ENCODE measurements at regions of chr5 and their contacts with region 1.

Region 1: GRCh38 chr5:145834917-145835847 is at the start of gene PRELID2:
- DNase-seq: peak; percentile 94 to 96
- ATAC-seq: peak; percentile 94
- H3K4me3 ChIP-seq: peak within 1 kb of the TSS; percentile 37 to 92
- H3K27ac ChIP-seq: peak within 1 kb of the TSS; percentile 67 to 69
- H3K4me1 ChIP-seq: peaks cover 0 to 7% of the 10 kb centered on the region in 2 donors
- H3K27me3 ChIP-seq: no peaks in the 10 kb centered on the region
- total RNA-seq, gene PRELID2: 26.7 to 28.7 TPM

Region 2: GRCh38 chr5:144203750-144204596 is 1631.2 kb before region 1 on chr5:
- intact Hi-C with region 1: loop called in 1 of 2 experiments (anchors 10 kb)
- DNase-seq: no peak
- ATAC-seq: peak; percentile 81
- H3K4me3 ChIP-seq: no peak overlapping the region
- H3K27ac ChIP-seq: no peak overlapping the region
- H3K4me1 ChIP-seq: no peaks in the 10 kb centered on the region
- H3K27me3 ChIP-seq: no peaks in the 10 kb centered on the region

Region 3: DNA sequence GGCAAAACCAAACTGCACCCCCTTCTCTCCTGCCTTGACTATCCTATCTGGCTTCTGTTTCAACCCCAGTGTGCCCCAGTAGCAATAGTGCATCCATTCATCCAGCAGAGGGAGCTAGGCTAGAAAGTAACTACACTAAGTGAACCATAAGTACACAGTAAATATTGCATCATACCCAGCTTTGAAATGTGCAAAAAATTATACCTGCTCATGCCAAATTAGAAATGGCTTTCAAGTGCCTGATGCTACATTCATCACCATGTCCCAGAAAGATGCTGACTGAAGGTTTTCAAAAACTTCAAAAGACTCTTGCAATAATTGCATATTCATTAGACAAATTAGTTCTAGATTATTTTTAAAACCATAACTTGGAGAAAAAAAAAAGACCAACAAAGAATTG is 153.5 kb before region 1 on chr5:
- intact Hi-C with region 1: no loop called
- DNase-seq: peak in 1 of 2 donors; percentile 50
- ATAC-seq: peak; percentile 71
- H3K4me3 ChIP-seq: no peak overlapping the region
- H3K27ac ChIP-seq: no peak overlapping the region
- H3K4me1 ChIP-seq: no peaks in the 10 kb centered on the region
- H3K27me3 ChIP-seq: no peaks in the 10 kb centered on the region

Region 4: GRCh38 chr5:145936401-145937131 is 101.4 kb after region 1 on chr5 and contains the start of gene SH3RF2:
- intact Hi-C with region 1: loop called in 1 of 2 experiments (anchors 5 kb)
- DNase-seq: peak; percentile 68 to 85
- ATAC-seq: peak; percentile 67
- H3K4me3 ChIP-seq: peak within 1 kb of the TSS; percentile 19 to 32
- H3K27ac ChIP-seq: peak within 1 kb of the TSS in 1 of 2 donors; percentile 58
- H3K4me1 ChIP-seq: peaks cover 0 to 1% of the 10 kb centered on the region in 2 donors
- H3K27me3 ChIP-seq: no peaks in the 10 kb centered on the region
- total RNA-seq, gene SH3RF2: 3.1 to 4.5 TPM

Region 5: GRCh38 chr5:145960848-145961600 is 125.8 kb after region 1 on chr5:
- intact Hi-C with region 1: no loop called
- DNase-seq: no peak
- ATAC-seq: no peak
- H3K4me3 ChIP-seq: no peak overlapping the region
- H3K27ac ChIP-seq: no peak overlapping the region
- H3K4me1 ChIP-seq: no peaks in the 10 kb centered on the region
- H3K27me3 ChIP-seq: no peaks in the 10 kb centered on the region

Region 6: GRCh38 chr5:146049014-146049703 is 214.0 kb after region 1 on chr5:
- intact Hi-C with region 1: loop called (anchors 5 to 10 kb)
- DNase-seq: no peak
- ATAC-seq: no peak
- H3K4me3 ChIP-seq: no peak overlapping the region
- H3K27ac ChIP-seq: no peak overlapping the region
- H3K4me1 ChIP-seq: no peaks in the 10 kb centered on the region
- H3K27me3 ChIP-seq: no peaks in the 10 kb centered on the region

Region 7: DNA sequence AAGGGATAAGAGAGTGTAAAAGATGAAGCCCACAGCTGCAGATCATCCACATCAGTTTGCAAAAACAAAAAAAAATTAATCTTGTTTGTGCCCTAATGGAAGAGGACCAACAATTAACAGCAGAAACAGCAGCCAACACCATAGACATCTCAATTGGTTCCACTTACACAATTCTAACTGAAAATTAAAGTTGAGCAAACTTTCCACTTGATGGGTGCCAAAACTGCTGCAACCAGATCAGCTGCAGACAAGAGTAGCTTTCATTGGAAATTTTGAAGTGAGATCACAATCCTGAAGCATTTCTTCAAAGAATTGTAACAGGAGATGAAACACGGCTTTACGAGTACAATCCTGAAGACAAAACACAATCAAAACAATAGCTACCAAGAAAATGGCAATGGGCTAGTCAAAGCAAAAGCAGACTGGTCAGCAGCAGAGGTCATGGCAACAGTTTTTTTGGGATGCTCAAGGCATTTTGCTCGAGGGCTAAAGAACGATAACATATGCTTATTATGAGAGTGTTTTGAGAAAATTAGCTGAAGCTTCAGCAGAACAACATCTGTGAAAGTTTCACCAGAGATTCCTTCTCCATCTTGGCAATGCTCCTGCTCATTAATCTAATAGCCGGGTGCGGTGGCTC is 364.1 kb after region 1 on chr5:
- intact Hi-C with region 1: no loop called
- DNase-seq: no peak
- ATAC-seq: no peak
- H3K4me3 ChIP-seq: no peak overlapping the region
- H3K27ac ChIP-seq: no peak overlapping the region
- H3K4me1 ChIP-seq: no peaks in the 10 kb centered on the region
- H3K27me3 ChIP-seq: no peaks in the 10 kb centered on the region